Activated CD4-positive, alpha-beta T cell treated with anti-CD3 and anti-CD28 coated beads for 36 hours (primary cell): ENCODE measurements at regions of chr10 and their contacts with region 1.

Region 1: DNA sequence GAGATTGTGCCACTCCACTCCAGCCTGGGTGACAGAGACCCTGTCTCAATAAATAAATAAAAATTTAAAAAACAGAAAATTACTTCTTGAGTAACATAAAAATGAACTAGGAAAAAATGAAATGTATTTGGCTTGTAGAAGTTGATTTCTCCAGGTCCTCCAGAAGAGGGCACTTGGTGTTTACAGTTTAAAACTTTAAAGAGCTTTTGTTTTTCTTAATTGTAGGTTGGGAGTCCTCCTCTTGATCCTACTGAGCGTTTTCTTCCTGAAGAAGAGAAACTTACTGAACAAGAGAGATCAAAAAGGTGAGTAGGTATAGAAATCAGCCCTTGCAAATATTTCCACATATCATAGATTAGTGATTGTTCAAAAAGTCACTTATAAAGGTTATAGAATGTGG is 16.2 kb downstream of the KIFBP start:
- DNase-seq: no peak
- ATAC-seq: peak; percentile 78
- H3K4me3 Mint-ChIP-seq: no peak overlapping the region
- H3K27ac Mint-ChIP-seq: no peak overlapping the region
- H3K4me1 Mint-ChIP-seq: peaks cover 10% of the 10 kb centered on the region
- H3K27me3 Mint-ChIP-seq: no peaks in the 10 kb centered on the region

Region 2: DNA sequence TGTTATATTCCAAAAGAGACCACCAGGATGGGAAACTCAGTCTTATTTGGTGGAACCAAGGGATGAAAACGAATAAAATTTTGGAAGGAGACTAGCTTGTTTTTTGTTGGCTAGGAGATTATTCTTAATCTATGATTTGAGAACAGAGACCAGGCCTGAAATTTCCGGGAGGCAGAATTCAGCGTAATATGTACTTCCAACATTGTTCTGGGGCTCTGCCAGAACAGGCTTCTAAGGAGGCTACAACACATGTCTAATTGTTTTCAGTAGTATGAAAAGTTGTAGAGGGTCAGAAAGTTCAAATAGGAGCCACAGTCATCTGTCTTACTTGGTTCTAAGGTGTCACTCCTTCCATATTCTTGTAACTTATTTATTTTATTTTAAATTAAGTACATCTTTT is 47.2 kb before region 1 on chr10:
- CTCF ChIA-PET with region 1: no interaction called
- POLR2A ChIA-PET with region 1: no interaction called
- intact Hi-C with region 1: no loop called
- DNase-seq: no peak
- ATAC-seq: no peak
- H3K4me3 Mint-ChIP-seq: peak overlapping the region; percentile 98
- H3K27ac Mint-ChIP-seq: peak overlapping the region; percentile 100
- H3K4me1 Mint-ChIP-seq: peaks cover 45% of the 10 kb centered on the region
- H3K27me3 Mint-ChIP-seq: no peaks in the 10 kb centered on the region

Region 3: DNA sequence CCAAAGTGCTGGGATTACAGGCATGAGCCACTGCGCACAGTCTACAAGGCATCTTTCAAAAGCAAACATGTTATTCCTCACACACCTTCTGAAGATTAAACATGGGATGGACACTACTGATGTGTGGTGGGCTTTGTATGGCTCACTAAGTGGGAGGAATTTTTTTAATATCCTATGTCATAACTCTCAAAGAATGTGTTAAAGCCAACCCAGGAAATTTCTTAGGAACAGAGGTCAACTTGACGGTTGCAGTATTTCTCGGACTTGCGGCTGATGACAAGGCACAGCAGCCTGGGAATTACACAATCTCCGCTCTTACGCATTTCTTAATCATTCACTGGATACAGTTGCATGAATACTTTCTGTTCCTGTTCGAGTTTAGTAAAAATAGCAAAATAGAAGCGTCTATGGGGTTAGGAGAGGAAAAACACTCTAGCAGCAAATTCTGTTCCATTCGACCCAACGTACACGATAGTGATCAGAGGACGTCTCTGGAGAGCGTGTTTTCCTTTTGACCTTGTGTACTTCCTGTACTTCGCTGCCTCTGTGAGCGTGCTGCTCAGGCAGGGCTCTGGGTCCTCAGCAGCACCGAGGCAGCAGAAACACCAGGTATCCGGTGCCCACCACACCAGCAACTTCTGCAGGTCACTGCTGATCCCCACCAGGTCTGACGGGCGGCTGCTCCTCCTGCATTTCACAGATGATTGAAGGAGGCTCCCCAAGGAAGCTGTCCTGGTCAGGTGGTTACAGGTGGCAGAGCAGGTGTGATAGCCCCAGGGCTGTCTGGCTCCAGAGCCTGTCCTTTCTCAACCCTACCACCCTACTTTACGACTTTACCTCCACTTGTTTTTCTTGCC is 56.7 kb after region 1 on chr10:
- CTCF ChIA-PET with region 1: interaction called, 17 read pairs
- POLR2A ChIA-PET with region 1: interaction called, 3 read pairs
- intact Hi-C with region 1: no loop called
- DNase-seq: peak; percentile 51
- ATAC-seq: peak; percentile 34
- H3K4me3 Mint-ChIP-seq: peak overlapping the region; percentile 67
- H3K27ac Mint-ChIP-seq: peak overlapping the region; percentile 89
- H3K4me1 Mint-ChIP-seq: peaks cover 60% of the 10 kb centered on the region
- H3K27me3 Mint-ChIP-seq: peaks cover 2% of the 10 kb centered on the region

Region 4: GRCh38 chr10:69092959-69093850 is 88.4 kb after region 1 on chr10:
- CTCF ChIA-PET with region 1: interaction called, 179 read pairs
- POLR2A ChIA-PET with region 1: interaction called, 8 read pairs
- intact Hi-C with region 1: loop called (anchors 1 kb)
- DNase-seq: peak; percentile 90
- ATAC-seq: peak; percentile 22
- H3K4me3 Mint-ChIP-seq: peak overlapping the region; percentile 30
- H3K27ac Mint-ChIP-seq: peak overlapping the region; percentile 81
- H3K4me1 Mint-ChIP-seq: peaks cover 60% of the 10 kb centered on the region
- H3K27me3 Mint-ChIP-seq: no peaks in the 10 kb centered on the region

Region 5: GRCh38 chr10:69107699-69108098 is 102.9 kb after region 1 on chr10:
- CTCF ChIA-PET with region 1: interaction called, 23 read pairs
- POLR2A ChIA-PET with region 1: no interaction called
- intact Hi-C with region 1: no loop called
- DNase-seq: no peak
- ATAC-seq: no peak
- H3K4me3 Mint-ChIP-seq: no peak overlapping the region
- H3K27ac Mint-ChIP-seq: no peak overlapping the region
- H3K4me1 Mint-ChIP-seq: no peaks in the 10 kb centered on the region
- H3K27me3 Mint-ChIP-seq: no peaks in the 10 kb centered on the region

Region 6: DNA sequence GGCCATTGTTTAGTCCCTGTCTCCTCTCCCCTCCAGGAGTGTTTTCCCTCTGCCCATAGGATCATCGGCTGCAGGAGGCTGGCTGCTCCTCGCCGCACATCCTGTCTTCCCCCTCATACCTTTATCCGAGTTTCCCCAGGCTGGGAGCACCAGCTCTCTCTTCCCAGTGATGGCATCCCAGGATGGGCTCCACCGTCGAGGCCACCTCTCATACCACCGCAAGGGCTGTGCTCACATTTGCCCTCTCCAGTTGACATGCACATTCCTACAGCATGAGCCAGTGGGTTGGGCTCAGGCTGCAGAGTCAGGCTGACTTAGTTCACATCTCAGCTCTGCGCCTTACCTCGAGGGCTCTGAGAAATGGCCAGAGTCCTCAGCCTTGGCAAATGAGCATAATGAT is 227.4 kb after region 1 on chr10:
- CTCF ChIA-PET with region 1: no interaction called
- POLR2A ChIA-PET with region 1: no interaction called
- intact Hi-C with region 1: no loop called
- DNase-seq: no peak
- ATAC-seq: no peak
- H3K4me3 Mint-ChIP-seq: no peak overlapping the region
- H3K27ac Mint-ChIP-seq: peak overlapping the region; percentile 34
- H3K4me1 Mint-ChIP-seq: peaks cover 47% of the 10 kb centered on the region
- H3K27me3 Mint-ChIP-seq: no peaks in the 10 kb centered on the region